Posterior vena cava (tissue), 2 donors: ENCODE measurements at regions of chr3 and their contacts with region 1.

Region 1: DNA sequence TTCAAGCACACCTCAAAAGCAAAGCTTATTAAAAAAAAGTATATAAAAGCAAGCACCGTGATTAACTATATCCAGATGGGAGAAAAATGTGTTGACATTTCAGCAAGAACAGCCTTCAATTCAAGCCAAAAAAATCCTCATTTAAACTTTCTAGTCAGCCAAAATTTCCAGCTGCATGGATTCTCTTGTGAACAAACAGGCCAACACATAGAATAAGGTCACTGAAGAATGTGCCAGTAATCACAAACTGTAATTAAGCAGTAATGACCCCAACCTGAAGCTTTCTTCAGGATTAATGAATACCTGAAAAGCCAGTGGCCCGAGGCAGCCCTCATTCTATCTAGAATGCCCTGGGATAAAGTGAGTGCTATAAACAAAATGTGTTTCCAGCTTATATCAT is 130.7 kb upstream of the KCNMB2 start:
- DNase-seq: no peak

Region 2: DNA sequence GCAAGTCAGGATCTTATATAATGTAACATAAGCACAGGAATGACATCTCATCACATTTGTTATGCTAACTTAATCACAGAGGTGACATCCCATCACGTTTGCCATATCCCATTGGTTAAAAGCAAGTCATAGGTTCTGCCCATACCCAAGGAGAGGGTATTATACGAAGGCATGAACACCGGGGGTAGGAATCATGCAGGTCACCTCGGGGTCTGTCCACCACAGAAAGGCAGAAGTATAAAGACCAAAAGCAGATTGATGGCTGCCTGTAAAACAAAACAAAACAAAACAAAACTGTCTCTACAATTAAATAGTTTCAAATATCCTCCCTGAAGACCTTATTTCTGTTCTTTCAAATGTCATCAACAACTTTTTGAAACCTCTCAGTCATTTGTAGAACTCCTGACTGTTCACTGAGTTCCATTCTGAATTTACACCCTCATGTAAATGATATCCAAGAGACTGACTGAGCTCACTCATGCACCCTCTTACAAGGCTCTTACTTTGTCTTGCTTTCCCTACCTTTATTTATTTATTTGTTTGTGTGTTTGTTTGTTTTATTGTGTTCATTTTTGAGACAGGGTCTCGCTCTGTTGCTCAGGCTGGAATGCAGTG is 894.6 kb after region 1 on chr3:
- intact Hi-C with region 1: loop called in 1 of 2 experiments (anchors 10 kb)
- DNase-seq: no peak